Esophagus muscularis mucosa (tissue), 4 donors: ENCODE measurements at regions of chr2 and their contacts with region 1.

Region 1: GRCh38 chr2:42095923-42096408 is 48.1 kb downstream of the PKDCC start:
- DNase-seq: no peak
- H3K4me3 ChIP-seq: no peak overlapping the region
- H3K27ac ChIP-seq: no peak overlapping the region
- H3K4me1 ChIP-seq: peaks cover 12 to 33% (median 30%) of the 10 kb centered on the region in 4 donors
- H3K27me3 ChIP-seq: no peaks in the 10 kb centered on the region
- CTCF ChIP-seq: peak; percentile 80 to 92 (median 91)
- EP300 ChIP-seq: no peak
- POLR2A ChIP-seq: no peak

Region 2: DNA sequence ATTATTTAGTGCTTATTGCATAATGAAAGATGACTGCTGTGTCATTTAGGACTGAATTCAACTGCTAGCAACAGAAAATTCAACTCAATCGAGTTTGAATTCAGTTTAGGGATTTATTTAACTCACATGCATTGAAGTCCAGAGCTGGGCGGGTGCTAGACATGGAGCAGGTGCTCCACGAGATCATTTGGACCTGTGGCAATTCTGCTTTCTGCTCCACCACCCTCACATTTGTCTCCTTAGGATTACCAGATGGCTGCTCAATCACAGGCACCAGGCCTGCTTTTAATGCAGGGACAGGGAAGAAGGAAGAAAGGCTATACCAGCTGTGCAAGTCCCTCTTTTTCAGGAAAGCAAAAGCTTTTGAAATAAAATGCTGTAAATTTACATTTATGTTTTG is 1071.2 kb before region 1 on chr2:
- intact Hi-C with region 1: no loop called
- DNase-seq: no peak
- H3K4me3 ChIP-seq: no peak overlapping the region
- H3K27ac ChIP-seq: no peak overlapping the region
- H3K4me1 ChIP-seq: no peaks in the 10 kb centered on the region
- H3K27me3 ChIP-seq: no peaks in the 10 kb centered on the region
- CTCF ChIP-seq: no peak
- EP300 ChIP-seq: no peak
- POLR2A ChIP-seq: no peak

Region 3: GRCh38 chr2:42010810-42011209 is 85.2 kb before region 1 on chr2:
- intact Hi-C with region 1: no loop called
- DNase-seq: no peak
- H3K4me3 ChIP-seq: no peak overlapping the region
- H3K27ac ChIP-seq: no peak overlapping the region
- H3K4me1 ChIP-seq: peaks cover 0 to 7% (median 0%) of the 10 kb centered on the region in 4 donors
- H3K27me3 ChIP-seq: no peaks in the 10 kb centered on the region
- CTCF ChIP-seq: no peak
- EP300 ChIP-seq: no peak
- POLR2A ChIP-seq: no peak

Region 4: GRCh38 chr2:42084231-42084671 is 11.7 kb before region 1 on chr2:
- intact Hi-C with region 1: no loop called
- DNase-seq: no peak
- H3K4me3 ChIP-seq: no peak overlapping the region
- H3K27ac ChIP-seq: peak overlapping the region; percentile 52 to 75 (median 61)
- H3K4me1 ChIP-seq: peaks cover 13 to 37% (median 35%) of the 10 kb centered on the region in 4 donors
- H3K27me3 ChIP-seq: no peaks in the 10 kb centered on the region
- CTCF ChIP-seq: no peak
- EP300 ChIP-seq: no peak
- POLR2A ChIP-seq: no peak

Region 5: GRCh38 chr2:42196403-42197267 is 100.7 kb after region 1 on chr2:
- intact Hi-C with region 1: loop called (anchors 5 kb)
- DNase-seq: no peak
- H3K4me3 ChIP-seq: no peak overlapping the region
- H3K27ac ChIP-seq: no peak overlapping the region
- H3K4me1 ChIP-seq: peaks cover 12 to 32% (median 27%) of the 10 kb centered on the region in 4 donors
- H3K27me3 ChIP-seq: no peaks in the 10 kb centered on the region
- CTCF ChIP-seq: peak; percentile 38 to 50 (median 47)
- EP300 ChIP-seq: no peak
- POLR2A ChIP-seq: no peak

Region 6: DNA sequence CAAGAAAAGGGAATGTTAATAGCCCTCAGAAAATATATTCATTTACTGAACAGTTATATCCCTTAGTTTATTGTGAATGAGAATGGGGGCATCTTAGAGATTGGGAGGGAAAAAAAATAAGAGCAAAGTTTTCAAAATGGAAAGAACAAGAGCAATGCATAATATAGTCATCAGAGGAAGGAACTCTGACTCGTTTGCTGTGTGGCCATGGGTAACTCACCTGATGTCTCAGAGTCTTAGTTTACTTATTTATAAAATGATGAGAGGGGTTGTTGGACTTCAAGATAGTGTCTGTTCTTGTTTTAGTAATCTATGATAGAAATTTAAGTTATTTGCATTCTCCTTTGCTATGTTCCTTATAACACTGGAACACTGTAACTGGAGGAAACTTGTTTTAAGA is 143.8 kb after region 1 on chr2:
- intact Hi-C with region 1: loop called (anchors 2 kb)
- DNase-seq: no peak
- H3K4me3 ChIP-seq: no peak overlapping the region
- H3K27ac ChIP-seq: no peak overlapping the region
- H3K4me1 ChIP-seq: peaks cover 0 to under 1% (median 0%) of the 10 kb centered on the region in 4 donors
- H3K27me3 ChIP-seq: no peaks in the 10 kb centered on the region
- CTCF ChIP-seq: no peak
- EP300 ChIP-seq: no peak
- POLR2A ChIP-seq: no peak

Region 7: DNA sequence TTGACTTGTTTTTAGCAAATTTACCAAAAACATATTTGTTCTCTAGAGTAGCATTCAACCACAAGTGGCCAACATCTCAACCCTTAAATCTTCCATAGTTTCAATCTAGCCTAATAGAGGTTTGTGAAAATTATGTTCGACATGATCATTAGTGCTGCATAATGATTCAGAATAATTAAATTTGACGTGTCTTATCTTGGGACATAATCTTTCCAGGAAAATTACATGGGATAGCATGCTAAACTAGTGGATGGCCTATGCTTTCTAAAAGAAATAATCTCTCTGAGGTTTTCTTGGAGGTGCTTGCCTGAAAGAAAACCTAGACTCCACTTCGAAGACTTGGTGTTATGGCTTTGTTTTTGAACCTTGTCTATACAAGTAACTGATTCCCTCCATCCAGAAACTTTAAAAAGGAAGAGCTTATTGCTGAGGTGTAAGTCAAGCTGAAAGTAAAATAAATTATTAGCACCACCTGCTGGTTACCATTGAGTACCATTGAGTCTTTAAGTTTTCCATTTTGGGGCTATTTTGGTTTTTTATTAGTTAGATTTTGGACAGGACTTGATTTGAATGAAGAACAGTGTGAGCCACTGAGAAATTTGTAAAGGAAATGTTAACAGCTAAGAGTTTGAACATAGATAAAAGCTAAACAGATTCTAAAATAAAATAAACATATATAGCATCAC is 232.3 kb after region 1 on chr2:
- intact Hi-C with region 1: loop called (anchors 2 kb)
- DNase-seq: no peak
- H3K4me3 ChIP-seq: no peak overlapping the region
- H3K27ac ChIP-seq: no peak overlapping the region
- H3K4me1 ChIP-seq: no peaks in the 10 kb centered on the region
- H3K27me3 ChIP-seq: no peaks in the 10 kb centered on the region
- CTCF ChIP-seq: peak; percentile 41 to 48 (median 47)
- EP300 ChIP-seq: no peak
- POLR2A ChIP-seq: no peak

Region 8: GRCh38 chr2:42342061-42342794 is 246.3 kb after region 1 on chr2:
- intact Hi-C with region 1: no loop called
- DNase-seq: peak; percentile 89
- H3K4me3 ChIP-seq: no peak overlapping the region
- H3K27ac ChIP-seq: peak overlapping the region; percentile 18 to 45 (median 30)
- H3K4me1 ChIP-seq: peaks cover 14 to 38% (median 28%) of the 10 kb centered on the region in 4 donors
- H3K27me3 ChIP-seq: no peaks in the 10 kb centered on the region
- CTCF ChIP-seq: no peak
- EP300 ChIP-seq: no peak
- POLR2A ChIP-seq: no peak

Region 9: DNA sequence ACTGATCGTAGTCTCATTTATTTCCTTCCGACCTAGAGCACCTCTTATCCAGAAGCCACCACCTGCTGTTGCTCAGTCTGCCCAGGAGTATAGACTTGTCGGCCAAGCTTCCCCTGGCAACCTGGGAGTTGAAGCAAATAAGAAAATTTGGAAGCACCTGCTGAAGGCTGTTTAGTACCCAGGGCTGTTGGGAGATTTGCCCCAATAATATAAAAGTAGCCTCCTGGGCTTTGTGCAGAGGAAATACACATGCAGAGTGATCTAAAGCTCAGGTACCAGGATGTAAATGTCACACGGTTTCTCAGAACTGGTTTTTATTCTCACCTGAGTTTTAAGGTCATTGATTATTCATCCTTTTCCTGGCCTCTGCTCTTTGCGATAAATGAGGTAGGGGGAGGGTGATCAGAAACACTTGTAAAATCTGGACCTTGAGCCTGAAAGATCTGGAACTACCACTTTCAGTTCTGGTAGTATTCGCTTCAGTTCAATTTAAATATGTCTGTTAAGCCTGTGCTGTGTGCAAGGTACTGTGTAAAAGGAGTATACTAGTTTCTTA is 265.8 kb after region 1 on chr2:
- intact Hi-C with region 1: loop called (anchors 2 kb)
- DNase-seq: no peak
- H3K4me3 ChIP-seq: peak overlapping the region; percentile 89 to 99 (median 92)
- H3K27ac ChIP-seq: peak overlapping the region; percentile 89 to 93 (median 92)
- H3K4me1 ChIP-seq: peaks cover 23 to 41% (median 35%) of the 10 kb centered on the region in 4 donors
- H3K27me3 ChIP-seq: no peaks in the 10 kb centered on the region
- CTCF ChIP-seq: no peak
- EP300 ChIP-seq: no peak
- POLR2A ChIP-seq: no peak